PC-9 (cell line): ENCODE measurements at regions of chr3 and their contacts with region 1.

Region 1: DNA sequence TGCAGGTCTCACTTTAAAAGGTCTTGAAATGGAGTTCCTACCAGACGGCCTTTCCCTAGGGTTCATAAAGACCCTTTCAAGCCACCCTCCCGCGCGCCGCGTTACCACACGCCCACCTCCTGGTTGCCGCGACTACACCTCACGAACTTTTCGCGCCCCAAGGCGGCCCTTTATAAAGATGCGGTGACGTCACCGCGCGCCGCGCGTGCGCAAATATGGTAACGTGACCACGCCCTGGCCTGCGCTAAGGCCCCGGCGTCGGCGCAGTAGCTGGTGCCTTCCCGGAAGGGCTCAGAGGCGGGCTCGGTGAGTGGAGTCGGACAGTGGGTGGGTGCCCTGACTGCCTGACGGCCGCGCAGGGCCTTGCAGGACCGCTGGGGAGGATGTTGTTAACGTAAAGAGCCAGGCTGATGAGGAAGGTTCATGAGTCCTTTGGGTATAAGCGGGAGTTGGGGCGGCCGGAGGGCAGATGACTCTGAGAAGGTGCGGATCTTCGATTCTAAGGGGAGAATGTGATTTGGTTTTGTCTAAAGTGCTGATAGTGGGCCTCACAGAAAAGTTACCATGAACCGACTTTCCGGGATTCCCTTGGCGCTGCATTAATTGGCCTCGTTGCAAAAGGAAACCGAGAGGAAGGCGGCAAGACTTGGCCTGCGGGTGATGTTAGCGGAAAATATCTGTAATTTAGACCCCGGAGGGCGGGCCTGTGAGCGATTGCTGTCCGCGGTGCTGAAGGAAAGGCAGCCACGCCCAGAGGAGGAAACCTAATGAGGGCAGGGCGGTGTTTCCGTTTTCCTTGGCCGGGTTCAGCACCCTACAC is 54.4 kb downstream of the FEZF2 start:
- DNase-seq: peak; percentile 61 to 72
- H3K4me3 ChIP-seq: peak overlapping the region; percentile 90
- H3K27ac ChIP-seq: no peak overlapping the region
- H3K4me1 ChIP-seq: 0 out of 2 replicates have a peak, but pooled peaks cover 5% of the 10 kb centered on the region
- H3K27me3 ChIP-seq: no peaks in the 10 kb centered on the region
- CTCF ChIP-seq: no peak

Region 2: GRCh38 chr3:60573494-60573893 is 1745.5 kb before region 1 on chr3:
- CTCF ChIA-PET with region 1: interaction called, 12 read pairs
- POLR2A ChIA-PET with region 1: no interaction called
- intact Hi-C with region 1: no loop called
- DNase-seq: no peak
- H3K4me3 ChIP-seq: no peak overlapping the region
- H3K27ac ChIP-seq: no peak overlapping the region
- H3K4me1 ChIP-seq: no peaks in the 10 kb centered on the region
- H3K27me3 ChIP-seq: no peaks in the 10 kb centered on the region
- CTCF ChIP-seq: no peak

Region 3: DNA sequence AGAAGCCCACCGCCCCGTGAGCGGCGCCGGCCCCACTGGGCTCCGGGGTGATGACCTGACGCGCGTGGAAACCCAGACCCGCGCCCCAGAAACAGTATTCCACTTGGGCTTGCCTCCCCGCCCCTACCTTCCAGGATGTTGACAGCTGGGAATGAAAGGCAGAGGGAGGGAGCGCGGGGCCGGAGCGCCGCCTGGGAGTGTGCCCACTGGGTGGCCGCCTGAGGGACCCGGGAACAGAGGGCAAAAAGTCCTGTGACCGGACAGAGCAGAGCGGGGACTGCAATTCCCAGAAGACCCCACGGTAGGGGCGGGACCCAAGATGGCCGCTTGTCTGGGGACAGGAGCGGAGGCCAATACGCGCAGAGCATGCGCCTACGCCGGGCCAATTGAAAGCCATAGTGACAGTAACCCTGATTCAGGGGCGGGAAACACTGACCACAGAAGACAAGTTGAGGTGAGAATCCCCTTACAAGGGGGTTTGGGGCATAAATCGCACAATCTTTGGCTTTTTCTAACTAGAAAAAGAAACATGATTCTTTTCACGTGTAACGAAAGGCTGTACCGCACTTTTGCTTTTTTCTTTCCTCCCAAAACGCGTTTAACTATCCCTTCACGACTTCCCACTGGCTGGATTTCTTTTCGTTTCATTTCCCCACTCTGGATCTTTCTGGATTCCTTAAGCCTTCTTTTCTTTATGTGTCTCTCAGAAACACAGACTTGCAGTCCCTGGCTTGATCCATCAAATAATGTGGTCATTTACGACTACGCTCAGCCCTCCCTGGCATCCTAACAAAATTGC is 1067.6 kb before region 1 on chr3 and contains the start of gene FHIT:
- CTCF ChIA-PET with region 1: no interaction called
- POLR2A ChIA-PET with region 1: no interaction called
- intact Hi-C with region 1: loop called (anchors 2 kb)
- DNase-seq: peak; percentile 81 to 95
- H3K4me3 ChIP-seq: peak within 1 kb of the TSS; percentile 65
- H3K27ac ChIP-seq: peak within 1 kb of the TSS; percentile 29
- H3K4me1 ChIP-seq: peaks cover 4% of the 10 kb centered on the region; the same call in 1 of the 2 replicates
- H3K27me3 ChIP-seq: no peaks in the 10 kb centered on the region
- CTCF ChIP-seq: no peak
- total RNA-seq, gene FHIT: 7.6 and 9.8 TPM in 2 replicates

Region 4: DNA sequence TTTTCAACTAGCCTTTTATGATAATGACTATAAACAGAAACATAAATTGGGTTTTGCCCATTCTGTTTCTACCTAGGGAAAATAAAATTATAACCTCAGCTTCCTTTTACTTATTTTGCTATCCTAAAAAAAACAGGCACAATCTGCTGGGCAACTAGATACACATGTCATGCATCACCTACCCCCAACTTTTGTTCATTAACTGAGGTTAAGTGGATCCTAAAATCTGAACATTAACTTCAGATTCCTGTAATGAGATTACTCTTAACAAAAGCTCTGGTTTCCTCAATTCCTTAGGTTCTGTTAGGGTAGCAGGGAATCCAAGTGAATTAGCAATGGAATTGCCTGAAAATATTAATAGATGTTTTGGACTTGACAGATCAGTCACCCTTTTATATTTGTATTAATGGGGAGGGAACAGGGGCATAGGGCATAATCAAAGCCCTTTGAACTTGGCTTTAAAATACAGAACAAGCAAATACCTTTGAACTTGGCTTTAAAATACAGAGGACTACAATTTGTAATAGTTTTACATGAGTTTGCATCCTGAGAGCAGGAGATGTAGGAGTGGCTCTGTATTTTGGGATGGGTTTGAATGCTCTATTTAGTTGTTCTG is 52.2 kb before region 1 on chr3:
- CTCF ChIA-PET with region 1: no interaction called
- POLR2A ChIA-PET with region 1: no interaction called
- intact Hi-C with region 1: no loop called
- DNase-seq: no peak
- H3K4me3 ChIP-seq: no peak overlapping the region
- H3K27ac ChIP-seq: no peak overlapping the region
- H3K4me1 ChIP-seq: no peaks in the 10 kb centered on the region
- H3K27me3 ChIP-seq: no peaks in the 10 kb centered on the region
- CTCF ChIP-seq: no peak

Region 5: GRCh38 chr3:62392626-62393292 is 73.8 kb after region 1 on chr3:
- CTCF ChIA-PET with region 1: no interaction called
- POLR2A ChIA-PET with region 1: no interaction called
- intact Hi-C with region 1: no loop called
- DNase-seq: no peak
- H3K4me3 ChIP-seq: no peak overlapping the region
- H3K27ac ChIP-seq: no peak overlapping the region
- H3K4me1 ChIP-seq: no peaks in the 10 kb centered on the region
- H3K27me3 ChIP-seq: peaks cover 14% of the 10 kb centered on the region
- CTCF ChIP-seq: no peak